Activated CD8-positive, alpha-beta T cell treated with anti-CD3 and anti-CD28 coated beads for 36 hours (primary cell): ENCODE measurements at regions of chr19 and their contacts with region 1.

Region 1: DNA sequence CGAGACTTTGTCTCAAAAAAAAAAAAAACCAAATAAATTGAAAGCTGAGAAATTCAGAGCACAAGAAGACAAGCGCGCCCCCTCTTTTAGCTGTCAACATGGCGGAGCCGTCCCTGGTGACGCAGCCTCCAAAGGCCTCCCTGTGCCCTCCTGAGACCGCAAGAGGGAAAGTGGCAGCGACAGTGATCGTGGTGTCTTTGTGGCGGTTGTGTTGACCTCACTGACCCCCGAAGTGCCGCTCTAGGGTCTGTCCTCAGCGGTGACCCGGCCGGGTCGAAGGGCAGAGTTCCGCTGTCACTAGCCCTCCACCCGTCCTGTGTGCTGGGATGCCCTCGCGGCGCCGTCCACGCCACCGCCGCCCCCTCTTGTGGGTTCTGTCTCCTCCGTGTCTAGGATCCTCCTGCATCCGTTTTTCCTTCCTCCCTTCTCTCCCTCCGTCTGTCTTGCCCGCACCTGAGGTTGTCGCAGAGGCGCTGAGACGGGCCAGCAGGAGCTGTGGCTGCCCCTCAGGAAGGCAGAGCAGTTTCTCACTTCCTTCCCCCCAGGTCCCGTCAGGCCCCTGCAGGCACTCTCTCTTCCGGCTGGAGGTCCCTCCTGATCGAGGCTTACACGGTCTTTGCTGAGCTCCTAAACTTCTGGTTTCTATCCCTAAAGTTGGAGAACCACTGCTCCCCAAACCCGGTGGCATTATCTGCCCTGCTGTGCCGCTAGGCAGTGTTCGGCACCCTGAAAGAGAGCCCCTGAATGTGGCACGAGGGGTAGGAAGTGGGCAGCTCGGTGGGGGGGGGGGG is 7.2 kb downstream of the UHRF1 start:
- DNase-seq: peak; percentile 67
- ATAC-seq: peak; percentile 10
- H3K4me3 Mint-ChIP-seq: peak overlapping the region; percentile 77
- H3K27ac Mint-ChIP-seq: peak overlapping the region; percentile 87
- H3K4me1 Mint-ChIP-seq: peaks cover 56% of the 10 kb centered on the region
- H3K27me3 Mint-ChIP-seq: no peaks in the 10 kb centered on the region
- CTCF ChIP-seq: no peak

Region 2: DNA sequence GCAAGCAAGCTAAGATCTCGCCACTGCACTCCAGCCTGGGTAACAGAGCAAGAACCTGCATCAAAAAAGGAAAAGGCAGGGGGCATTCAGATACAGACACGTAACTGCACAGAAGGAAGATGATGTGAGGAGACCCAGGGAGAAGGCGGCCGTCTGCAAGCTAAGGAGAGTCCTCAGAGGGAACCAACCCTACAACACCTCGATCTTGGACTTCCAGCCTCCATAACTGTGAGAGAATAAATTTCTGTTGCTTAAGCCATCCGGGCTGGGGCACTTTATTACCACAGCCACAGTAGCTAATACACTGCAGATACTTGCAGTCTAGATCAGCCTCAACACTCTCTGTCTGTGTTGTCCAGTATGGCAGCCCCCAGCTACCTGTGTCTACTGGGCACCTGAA is 92.9 kb before region 1 on chr19:
- CTCF ChIA-PET with region 1: no interaction called
- POLR2A ChIA-PET with region 1: no interaction called
- intact Hi-C with region 1: no loop called
- DNase-seq: no peak
- ATAC-seq: no peak
- H3K4me3 Mint-ChIP-seq: no peak overlapping the region
- H3K27ac Mint-ChIP-seq: no peak overlapping the region
- H3K4me1 Mint-ChIP-seq: peaks cover 1% of the 10 kb centered on the region
- H3K27me3 Mint-ChIP-seq: no peaks in the 10 kb centered on the region
- CTCF ChIP-seq: no peak

Region 3: GRCh38 chr19:4930664-4931063 is 14.2 kb after region 1 on chr19:
- CTCF ChIA-PET with region 1: interaction called, 3 read pairs
- POLR2A ChIA-PET with region 1: interaction called, 48 read pairs
- intact Hi-C with region 1: no loop called
- DNase-seq: peak; percentile 14
- ATAC-seq: no peak
- H3K4me3 Mint-ChIP-seq: no peak overlapping the region
- H3K27ac Mint-ChIP-seq: no peak overlapping the region
- H3K4me1 Mint-ChIP-seq: peaks cover 5% of the 10 kb centered on the region
- H3K27me3 Mint-ChIP-seq: no peaks in the 10 kb centered on the region
- CTCF ChIP-seq: no peak